ENCODE measurements at regions of chr5 and their contacts with region 1.

Region 1: GRCh38 chr5:148290271-148291195 is 21.7 kb upstream of the SPINK7 start:
- DNase-seq: no peak
- H3K4me3 ChIP-seq: no peak overlapping the region
- H3K27ac ChIP-seq: no peak overlapping the region
- H3K4me1 ChIP-seq: 0 out of 7 replicates have a peak, but pooled peaks cover 0 to 3% (median 0%) of the 10 kb centered on the region in 4 experiments
- H3K27me3 ChIP-seq: no peaks in the 10 kb centered on the region
- CTCF ChIP-seq: peak in 2 of 3 experiments; percentile 45 to 57; a peak in 2 of 4 replicates
- EP300 ChIP-seq: no peak
- POLR2A ChIP-seq: no peak
- RAD21 ChIP-seq: peak; percentile 73 to 77

Region 2: GRCh38 chr5:147203213-147203612 is 1087.3 kb before region 1 on chr5:
- CTCF ChIA-PET with region 1: no interaction called
- POLR2A ChIA-PET with region 1: no interaction called
- DNase-seq: no peak
- H3K4me3 ChIP-seq: no peak overlapping the region
- H3K27ac ChIP-seq: no peak overlapping the region
- H3K4me1 ChIP-seq: no peaks in the 10 kb centered on the region
- H3K27me3 ChIP-seq: no peaks in the 10 kb centered on the region
- CTCF ChIP-seq: no peak
- EP300 ChIP-seq: no peak
- POLR2A ChIP-seq: no peak
- RAD21 ChIP-seq: no peak

Region 3: DNA sequence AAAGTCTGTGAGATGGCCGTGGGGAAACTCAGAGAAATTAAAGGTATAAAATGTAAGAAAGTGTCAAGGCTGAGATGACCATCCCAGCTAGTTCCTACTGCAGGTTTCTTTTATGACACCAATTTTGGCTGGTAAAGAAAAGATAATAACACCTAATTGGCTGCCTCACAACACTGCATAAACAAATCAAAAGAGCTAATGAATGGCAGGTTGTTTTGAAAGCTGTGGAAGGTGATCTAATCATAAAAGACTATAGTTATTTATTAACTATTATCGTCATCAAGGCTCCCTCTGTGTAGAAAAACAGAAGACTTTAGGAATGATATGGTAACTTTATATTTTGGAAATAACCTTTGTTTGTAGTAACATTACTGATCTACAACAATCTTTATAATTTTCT is 230.2 kb before region 1 on chr5:
- CTCF ChIA-PET with region 1: no interaction called
- POLR2A ChIA-PET with region 1: no interaction called
- DNase-seq: no peak
- H3K4me3 ChIP-seq: no peak overlapping the region
- H3K27ac ChIP-seq: no peak overlapping the region
- H3K4me1 ChIP-seq: no peaks in the 10 kb centered on the region
- H3K27me3 ChIP-seq: no peaks in the 10 kb centered on the region
- CTCF ChIP-seq: no peak
- EP300 ChIP-seq: no peak
- POLR2A ChIP-seq: no peak
- RAD21 ChIP-seq: no peak

Region 4: GRCh38 chr5:148306446-148306845 is 15.9 kb after region 1 on chr5:
- CTCF ChIA-PET with region 1: interaction called, 18 read pairs
- POLR2A ChIA-PET with region 1: no interaction called
- DNase-seq: no peak
- H3K4me3 ChIP-seq: no peak overlapping the region
- H3K27ac ChIP-seq: no peak overlapping the region
- H3K4me1 ChIP-seq: no peaks in the 10 kb centered on the region
- H3K27me3 ChIP-seq: peaks cover 0 to under 1% (median 0%) of the 10 kb centered on the region in 4 experiments; a peak in 1 of 7 replicates
- CTCF ChIP-seq: peak in 2 of 3 experiments; percentile 11 to 12; a peak in 2 of 4 replicates
- EP300 ChIP-seq: no peak
- POLR2A ChIP-seq: no peak
- RAD21 ChIP-seq: peak; percentile 28 to 35

Region 5: GRCh38 chr5:148314204-148314603 is 23.7 kb after region 1 on chr5:
- CTCF ChIA-PET with region 1: interaction called, 10 read pairs
- POLR2A ChIA-PET with region 1: no interaction called
- DNase-seq: no peak
- H3K4me3 ChIP-seq: no peak overlapping the region
- H3K27ac ChIP-seq: no peak overlapping the region
- H3K4me1 ChIP-seq: no peaks in the 10 kb centered on the region
- H3K27me3 ChIP-seq: peaks cover 0 to 2% (median 0%) of the 10 kb centered on the region in 4 experiments; a peak in 1 of 7 replicates
- CTCF ChIP-seq: no peak
- EP300 ChIP-seq: no peak
- POLR2A ChIP-seq: no peak
- RAD21 ChIP-seq: no peak